Activated naive CD4-positive, alpha-beta T cell treated with anti-CD3 and anti-CD28 coated beads for 36 hours (primary cell): ENCODE measurements at regions of chr5 and their contacts with region 1.

Region 1: DNA sequence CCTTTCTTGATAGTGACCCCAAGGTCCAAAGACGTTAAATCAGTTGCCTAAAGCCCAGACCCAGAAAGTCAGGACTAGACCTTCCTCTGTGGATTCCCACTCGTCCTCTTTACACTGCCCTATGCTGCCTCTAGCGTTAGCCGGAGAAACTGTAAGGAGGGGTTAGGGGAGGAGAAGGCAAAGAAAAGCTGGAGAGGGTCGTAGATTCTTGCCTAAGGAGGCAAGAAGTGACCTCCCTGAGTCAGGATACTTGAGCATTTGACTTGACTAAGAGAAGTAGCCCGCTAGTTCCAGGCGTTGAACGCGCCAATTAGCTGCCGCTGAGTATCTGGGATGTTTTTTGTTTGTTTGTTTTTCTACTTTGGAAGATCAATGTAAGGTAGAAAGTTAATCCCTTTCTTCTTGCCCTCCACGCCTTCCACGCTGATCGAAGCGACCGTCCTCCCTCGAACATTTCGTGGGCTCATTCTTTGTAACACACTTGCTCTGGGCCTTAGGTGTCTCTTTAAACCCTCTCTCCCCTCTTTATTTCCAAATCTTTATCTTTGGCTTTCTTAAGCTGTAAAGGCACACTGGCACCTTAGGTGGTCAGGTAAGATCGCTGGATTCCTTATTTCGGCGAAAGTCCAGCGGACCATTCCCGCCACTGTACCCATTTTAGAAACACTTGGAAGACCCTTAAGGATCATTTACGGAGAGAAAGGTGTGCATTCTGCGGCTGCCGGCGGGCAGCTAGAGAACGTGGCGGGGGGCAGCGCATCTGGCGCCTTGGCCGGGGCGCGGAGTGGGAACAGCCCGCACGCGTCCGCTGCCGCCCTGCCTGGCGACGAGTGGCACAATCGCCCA is 5.1 kb upstream of the RGMB start:
- DNase-seq: peak; percentile 61
- H3K4me3 Mint-ChIP-seq: peak overlapping the region; percentile 91
- H3K27ac Mint-ChIP-seq: no peak overlapping the region
- H3K4me1 Mint-ChIP-seq: peaks cover 17% of the 10 kb centered on the region
- H3K27me3 Mint-ChIP-seq: peaks cover 30% of the 10 kb centered on the region

Region 2: DNA sequence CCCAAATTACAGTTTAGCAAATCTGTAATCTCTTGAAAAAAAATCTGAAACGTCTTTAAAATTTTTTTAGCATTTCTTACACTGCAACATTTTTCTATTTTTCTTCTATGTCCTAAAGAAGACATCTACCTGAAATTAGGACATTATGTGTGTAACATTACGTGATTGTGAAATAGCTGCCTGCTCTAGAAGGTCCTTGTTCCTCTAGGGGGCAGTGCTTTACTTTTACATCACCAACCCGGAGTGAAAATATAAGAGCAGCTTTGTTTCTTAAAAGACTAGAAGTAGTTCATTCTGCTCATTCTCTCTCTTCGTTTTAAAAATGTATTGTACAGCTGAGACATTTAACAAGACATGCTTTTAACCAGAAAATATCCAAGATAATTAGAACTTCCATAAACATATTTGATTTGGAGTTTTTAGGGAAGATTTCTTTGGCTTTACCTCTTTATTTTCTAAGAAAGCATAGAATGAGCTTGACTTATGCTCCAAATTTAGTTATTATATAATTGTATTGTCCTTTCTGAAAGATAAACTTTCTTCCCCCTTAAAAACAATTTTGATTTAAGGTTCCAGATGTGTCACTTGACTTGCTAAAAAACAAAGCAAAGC is 1537.3 kb before region 1 on chr5:
- CTCF ChIA-PET with region 1: interaction called, 9 read pairs
- intact Hi-C with region 1: loop called (anchors 1 kb)
- DNase-seq: peak; percentile 55
- H3K4me3 Mint-ChIP-seq: no peak overlapping the region
- H3K27ac Mint-ChIP-seq: no peak overlapping the region
- H3K4me1 Mint-ChIP-seq: no peaks in the 10 kb centered on the region
- H3K27me3 Mint-ChIP-seq: peaks cover 3% of the 10 kb centered on the region

Region 3: GRCh38 chr5:98753507-98753906 is 14.9 kb before region 1 on chr5:
- CTCF ChIA-PET with region 1: interaction called, 10 read pairs
- intact Hi-C with region 1: no loop called
- DNase-seq: no peak
- H3K4me3 Mint-ChIP-seq: no peak overlapping the region
- H3K27ac Mint-ChIP-seq: no peak overlapping the region
- H3K4me1 Mint-ChIP-seq: no peaks in the 10 kb centered on the region
- H3K27me3 Mint-ChIP-seq: peaks cover 5% of the 10 kb centered on the region

Region 4: DNA sequence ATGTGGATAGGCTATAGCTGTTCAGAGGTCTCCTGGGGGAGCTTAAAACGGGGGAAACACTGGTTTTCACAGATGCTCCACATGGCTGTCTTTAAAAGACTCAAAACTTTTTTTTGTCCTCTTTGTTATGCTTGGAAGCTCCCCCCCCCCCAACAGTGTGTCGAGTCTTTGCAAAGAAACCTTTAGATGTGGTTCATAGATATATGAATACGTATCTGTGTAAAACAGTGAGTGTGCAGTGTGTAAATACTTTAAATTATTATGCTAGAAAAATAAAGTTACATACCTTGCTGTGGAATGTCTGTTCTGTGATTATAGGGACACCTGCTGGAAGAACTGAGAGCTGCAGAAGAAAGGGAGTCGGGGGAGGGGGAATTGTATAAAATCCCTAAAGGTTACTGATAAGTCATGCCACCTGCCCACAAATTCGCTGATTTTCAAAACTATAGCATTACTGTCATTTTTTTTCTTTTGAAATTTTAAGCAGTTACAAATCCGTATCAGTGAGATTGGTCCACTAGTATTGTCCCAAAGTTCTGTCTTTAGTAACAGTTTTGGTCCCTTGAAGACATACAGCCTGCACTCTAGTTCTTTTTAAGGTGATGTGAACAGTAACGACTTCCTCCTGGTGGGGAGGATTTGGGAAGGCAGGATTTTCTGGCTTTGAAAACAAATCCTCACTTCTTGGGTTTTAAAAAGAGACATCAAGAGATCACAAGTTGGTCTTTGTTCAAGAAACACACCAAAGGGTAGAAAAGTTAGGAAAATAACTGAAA is 28.0 kb after region 1 on chr5:
- CTCF ChIA-PET with region 1: interaction called, 155 read pairs
- intact Hi-C with region 1: loop called (anchors 1 kb)
- DNase-seq: peak; percentile 79
- H3K4me3 Mint-ChIP-seq: no peak overlapping the region
- H3K27ac Mint-ChIP-seq: no peak overlapping the region
- H3K4me1 Mint-ChIP-seq: peaks cover 1% of the 10 kb centered on the region
- H3K27me3 Mint-ChIP-seq: no peaks in the 10 kb centered on the region

Region 5: DNA sequence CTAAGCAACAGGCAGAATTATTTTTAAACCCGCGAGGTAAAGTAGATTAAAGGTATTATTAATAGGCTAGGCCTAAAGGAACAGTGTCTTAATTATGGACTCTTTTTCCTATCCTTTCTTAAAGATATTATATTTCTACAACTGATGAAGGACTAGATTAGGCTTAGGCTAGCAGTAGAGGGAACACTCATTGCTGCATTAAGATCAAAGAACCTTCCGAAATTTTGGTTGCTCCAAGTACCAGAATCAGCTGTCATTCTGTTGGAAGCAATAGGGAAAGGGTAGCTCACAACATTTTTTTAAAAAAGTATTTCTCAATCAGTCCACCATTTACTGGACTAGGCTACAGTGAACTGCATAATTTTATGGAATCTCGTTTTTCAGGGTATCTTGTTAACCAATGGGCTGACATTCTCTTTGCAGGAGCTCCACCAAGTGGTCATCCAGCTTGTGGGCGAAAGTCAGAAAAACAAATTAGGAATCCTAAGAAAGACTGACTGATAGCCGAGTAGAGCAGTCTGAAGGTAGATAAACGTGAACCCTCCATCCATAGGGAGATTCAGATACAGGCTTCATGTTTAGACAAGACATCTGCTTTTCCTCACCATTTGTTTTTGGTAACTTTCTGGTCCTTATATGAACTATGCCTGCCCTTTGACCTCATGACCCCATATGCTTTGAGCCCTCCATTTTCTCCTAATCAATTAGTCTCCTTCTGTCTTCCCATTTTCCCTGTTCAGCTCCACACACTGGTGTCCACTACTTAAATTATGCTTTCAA is 264.0 kb after region 1 on chr5:
- CTCF ChIA-PET with region 1: interaction called, 3 read pairs
- intact Hi-C with region 1: loop called (anchors 1 kb)
- DNase-seq: peak; percentile 75
- H3K4me3 Mint-ChIP-seq: peak overlapping the region; percentile 72
- H3K27ac Mint-ChIP-seq: peak overlapping the region; percentile 84
- H3K4me1 Mint-ChIP-seq: peaks cover 72% of the 10 kb centered on the region
- H3K27me3 Mint-ChIP-seq: no peaks in the 10 kb centered on the region

Region 6: DNA sequence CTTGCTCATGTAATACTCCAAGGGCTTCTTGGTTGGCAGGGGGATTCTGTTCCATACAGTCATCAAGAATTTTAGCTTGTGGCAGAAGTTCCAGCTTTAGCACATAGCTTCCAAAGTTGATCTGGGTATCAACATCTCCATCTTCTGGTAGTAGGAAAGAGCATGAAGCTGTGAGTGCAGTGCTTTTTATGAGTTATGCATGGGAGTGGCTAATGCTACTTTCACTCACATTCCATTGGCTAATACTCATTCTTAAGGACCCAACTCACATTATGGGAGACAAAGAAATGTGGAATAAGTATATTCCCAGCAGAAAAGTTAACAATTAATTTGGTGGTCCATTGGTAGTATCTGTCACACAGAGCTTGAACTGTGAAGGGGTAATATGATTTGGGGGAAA is 354.6 kb after region 1 on chr5:
- CTCF ChIA-PET with region 1: no interaction called
- intact Hi-C with region 1: no loop called
- DNase-seq: no peak
- H3K4me3 Mint-ChIP-seq: no peak overlapping the region
- H3K27ac Mint-ChIP-seq: no peak overlapping the region
- H3K4me1 Mint-ChIP-seq: no peaks in the 10 kb centered on the region
- H3K27me3 Mint-ChIP-seq: no peaks in the 10 kb centered on the region